Activated naive CD4-positive, alpha-beta T cell treated with anti-CD3 and anti-CD28 coated beads, Interleukin-2, amount 10 ng/mL, durations not matched to agents 7 days and 5 days (primary cell): ENCODE measurements at regions of chr5 and their contacts with region 1.

Region 1: GRCh38 chr5:175534070-175534932 is 55.9 kb downstream of the SFXN1 start:
- DNase-seq: peak; percentile 87
- H3K4me3 Mint-ChIP-seq: peak overlapping the region; percentile 33
- H3K27ac Mint-ChIP-seq: peak overlapping the region; percentile 9
- H3K4me1 Mint-ChIP-seq: peaks cover 42% of the 10 kb centered on the region
- H3K27me3 Mint-ChIP-seq: no peaks in the 10 kb centered on the region

Region 2: DNA sequence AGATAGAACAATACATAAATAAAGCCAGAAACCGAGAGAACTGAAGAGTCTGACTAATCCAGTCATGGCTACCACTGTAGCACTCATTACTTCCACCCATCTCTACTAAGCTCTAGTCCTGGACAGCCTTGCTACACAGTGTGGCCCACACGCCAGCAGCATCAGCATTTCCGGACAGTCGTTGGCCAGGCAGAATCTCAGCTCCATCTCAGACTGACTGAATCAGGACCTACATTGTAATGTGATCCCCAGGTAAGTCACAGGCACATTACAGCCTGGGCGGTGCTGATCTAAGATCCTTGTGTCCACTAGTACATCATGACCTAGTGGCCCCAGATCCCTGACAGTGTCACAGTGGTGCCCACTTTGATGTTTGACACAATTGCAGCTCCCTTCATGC is 273.2 kb before region 1 on chr5:
- CTCF ChIA-PET with region 1: no interaction called
- DNase-seq: no peak
- H3K4me3 Mint-ChIP-seq: no peak overlapping the region
- H3K27ac Mint-ChIP-seq: no peak overlapping the region
- H3K4me1 Mint-ChIP-seq: no peaks in the 10 kb centered on the region
- H3K27me3 Mint-ChIP-seq: no peaks in the 10 kb centered on the region

Region 3: DNA sequence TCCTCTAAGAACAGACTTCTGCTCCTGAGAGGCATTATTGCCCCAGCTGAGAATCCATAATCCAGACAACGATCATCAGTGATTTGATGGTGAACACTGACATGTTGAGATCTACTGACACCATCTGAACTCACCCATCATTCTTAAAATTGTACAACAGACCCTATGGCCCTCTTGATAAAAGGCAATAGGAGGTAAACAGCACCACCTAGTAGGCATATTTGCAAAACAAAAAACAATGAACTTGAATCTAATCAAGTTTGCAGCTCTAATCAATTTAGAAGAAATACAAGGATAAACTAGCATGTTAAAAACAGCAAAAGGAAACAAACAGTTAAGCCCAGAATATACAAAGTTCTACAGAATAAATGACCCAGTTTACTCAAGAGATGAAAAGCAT is 33.7 kb after region 1 on chr5:
- CTCF ChIA-PET with region 1: interaction called, 10 read pairs
- DNase-seq: no peak
- H3K4me3 Mint-ChIP-seq: no peak overlapping the region
- H3K27ac Mint-ChIP-seq: no peak overlapping the region
- H3K4me1 Mint-ChIP-seq: no peaks in the 10 kb centered on the region
- H3K27me3 Mint-ChIP-seq: peaks cover 21% of the 10 kb centered on the region

Region 4: GRCh38 chr5:175590471-175590881 is 56.2 kb after region 1 on chr5:
- CTCF ChIA-PET with region 1: no interaction called
- DNase-seq: no peak
- H3K4me3 Mint-ChIP-seq: no peak overlapping the region
- H3K27ac Mint-ChIP-seq: no peak overlapping the region
- H3K4me1 Mint-ChIP-seq: no peaks in the 10 kb centered on the region
- H3K27me3 Mint-ChIP-seq: peaks cover 28% of the 10 kb centered on the region

Region 5: DNA sequence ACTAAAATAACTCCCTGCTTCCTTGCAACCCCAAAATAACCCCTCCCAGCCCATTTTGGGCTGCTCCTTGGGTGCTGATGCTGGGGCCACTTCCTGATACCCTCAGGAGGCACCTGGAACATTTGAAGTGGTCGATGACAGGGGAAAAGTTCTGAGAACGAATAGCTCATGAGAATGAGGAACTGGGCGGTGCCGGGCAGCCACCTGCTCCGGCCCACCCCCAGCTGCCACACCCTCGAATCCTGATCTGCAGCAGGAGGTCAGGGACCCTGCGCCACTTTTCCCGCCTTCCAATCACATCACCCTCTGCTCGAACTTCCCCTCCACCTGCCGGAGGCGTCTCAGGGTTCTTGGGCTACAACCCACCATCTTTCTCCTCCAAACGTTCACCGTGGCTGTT is 143.3 kb after region 1 on chr5:
- CTCF ChIA-PET with region 1: interaction called, 10 read pairs
- DNase-seq: no peak
- H3K4me3 Mint-ChIP-seq: peak overlapping the region; percentile 11
- H3K27ac Mint-ChIP-seq: no peak overlapping the region
- H3K4me1 Mint-ChIP-seq: peaks cover 69% of the 10 kb centered on the region
- H3K27me3 Mint-ChIP-seq: no peaks in the 10 kb centered on the region

Region 6: DNA sequence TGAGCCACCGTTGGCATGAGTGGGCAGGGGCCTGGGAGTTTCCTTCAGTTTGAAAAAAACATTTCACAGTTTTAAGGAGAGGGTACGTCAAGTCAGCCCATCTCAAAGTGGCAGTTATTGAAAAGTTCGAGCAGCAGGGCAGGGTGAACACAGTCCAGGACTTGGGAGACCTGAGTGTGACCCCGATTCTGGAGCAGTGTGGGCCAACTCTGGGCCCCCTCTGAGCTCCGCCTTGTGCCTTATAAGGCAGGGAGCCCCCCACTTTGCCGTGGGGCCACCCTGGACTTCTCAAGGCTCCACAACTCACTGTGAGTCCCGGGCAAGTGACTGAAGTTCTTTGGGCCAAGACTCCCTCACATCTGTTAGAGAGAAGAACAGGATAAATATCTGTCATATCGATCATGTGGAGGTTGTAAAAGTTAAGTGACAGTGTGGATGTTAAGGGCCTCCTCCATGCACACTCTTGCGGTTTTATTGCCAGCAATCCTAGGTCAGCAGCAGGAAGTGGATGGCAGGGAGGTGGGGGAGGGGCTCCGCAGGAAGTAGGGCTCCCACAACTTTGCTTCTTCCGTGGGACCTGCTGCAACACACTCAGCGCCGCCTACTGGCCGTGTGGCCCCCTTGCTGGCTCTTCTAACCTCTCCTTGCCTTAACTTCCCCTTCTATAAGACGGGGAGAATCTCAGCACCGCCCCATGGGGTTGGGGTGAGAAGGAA is 162.0 kb after region 1 on chr5:
- CTCF ChIA-PET with region 1: interaction called, 88 read pairs
- DNase-seq: peak; percentile 85
- H3K4me3 Mint-ChIP-seq: peak overlapping the region; percentile 32
- H3K27ac Mint-ChIP-seq: peak overlapping the region; percentile 86
- H3K4me1 Mint-ChIP-seq: peaks cover 30% of the 10 kb centered on the region
- H3K27me3 Mint-ChIP-seq: no peaks in the 10 kb centered on the region

Region 7: GRCh38 chr5:175729829-175730277 is 195.6 kb after region 1 on chr5:
- CTCF ChIA-PET with region 1: interaction called, 31 read pairs
- DNase-seq: peak; percentile 95
- H3K4me3 Mint-ChIP-seq: no peak overlapping the region
- H3K27ac Mint-ChIP-seq: no peak overlapping the region
- H3K4me1 Mint-ChIP-seq: peaks cover 9% of the 10 kb centered on the region
- H3K27me3 Mint-ChIP-seq: peaks cover 58% of the 10 kb centered on the region